Colonic mucosa (tissue), 4 donors: ENCODE measurements at regions of chr6 and their contacts with region 1.

Region 1: DNA sequence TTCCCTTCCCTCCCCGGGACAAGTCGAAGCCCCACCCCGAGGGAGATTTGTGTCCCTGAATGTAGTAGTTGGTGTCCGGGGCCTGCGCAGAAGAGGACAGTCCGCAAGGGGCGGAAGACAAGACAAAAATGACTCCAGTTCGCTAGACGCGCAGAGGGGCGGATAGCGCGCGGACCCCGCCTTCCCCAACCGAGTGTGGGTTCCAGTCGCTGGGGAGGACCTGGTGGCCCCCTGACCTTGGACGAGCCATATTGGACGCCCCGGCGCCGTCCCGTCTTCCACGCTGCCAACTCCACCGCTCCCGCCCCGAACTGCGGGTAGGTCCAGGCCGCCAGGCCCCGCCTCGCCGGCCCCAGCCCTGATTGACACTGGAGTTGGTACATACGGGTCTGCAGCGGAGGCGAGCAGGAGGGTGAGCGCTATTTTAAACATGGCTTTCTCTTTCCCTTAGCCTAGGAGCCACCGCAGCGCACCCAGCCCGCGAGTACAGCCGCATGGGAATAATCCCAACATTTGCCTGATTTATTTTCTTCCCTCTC is 802 bp downstream of the HMGN3 start:
- DNase-seq: peak; percentile 88
- H3K4me3 ChIP-seq: peak overlapping the region; percentile 63
- H3K27ac ChIP-seq: peak overlapping the region; percentile 83
- H3K4me1 ChIP-seq: no peaks in the 10 kb centered on the region
- H3K27me3 ChIP-seq: no peaks in the 10 kb centered on the region
- CTCF ChIP-seq: peak; percentile 25

Region 2: GRCh38 chr6:79078075-79079025 is 155.3 kb before region 1 on chr6 and contains the start of gene PHIP:
- intact Hi-C with region 1: loop called (anchors 5 kb)
- DNase-seq: peak; percentile 92
- H3K4me3 ChIP-seq: peak within 1 kb of the TSS; percentile 75
- H3K27ac ChIP-seq: peak within 1 kb of the TSS; percentile 99
- H3K4me1 ChIP-seq: peaks cover 9% of the 10 kb centered on the region
- H3K27me3 ChIP-seq: no peaks in the 10 kb centered on the region
- CTCF ChIP-seq: no peak
- total RNA-seq, gene PHIP: 19.3 to 20.5 TPM

Region 3: GRCh38 chr6:79544939-79545450 is 311.3 kb after region 1 on chr6:
- intact Hi-C with region 1: loop called (anchors 10 kb)
- DNase-seq: peak; percentile 65
- H3K4me3 ChIP-seq: no peak overlapping the region
- H3K27ac ChIP-seq: peak overlapping the region; percentile 53
- H3K4me1 ChIP-seq: peaks cover 6% of the 10 kb centered on the region
- H3K27me3 ChIP-seq: no peaks in the 10 kb centered on the region
- CTCF ChIP-seq: peak; percentile 35